ENCODE measurements at regions of chr13 and their contacts with region 1.

Region 1: DNA sequence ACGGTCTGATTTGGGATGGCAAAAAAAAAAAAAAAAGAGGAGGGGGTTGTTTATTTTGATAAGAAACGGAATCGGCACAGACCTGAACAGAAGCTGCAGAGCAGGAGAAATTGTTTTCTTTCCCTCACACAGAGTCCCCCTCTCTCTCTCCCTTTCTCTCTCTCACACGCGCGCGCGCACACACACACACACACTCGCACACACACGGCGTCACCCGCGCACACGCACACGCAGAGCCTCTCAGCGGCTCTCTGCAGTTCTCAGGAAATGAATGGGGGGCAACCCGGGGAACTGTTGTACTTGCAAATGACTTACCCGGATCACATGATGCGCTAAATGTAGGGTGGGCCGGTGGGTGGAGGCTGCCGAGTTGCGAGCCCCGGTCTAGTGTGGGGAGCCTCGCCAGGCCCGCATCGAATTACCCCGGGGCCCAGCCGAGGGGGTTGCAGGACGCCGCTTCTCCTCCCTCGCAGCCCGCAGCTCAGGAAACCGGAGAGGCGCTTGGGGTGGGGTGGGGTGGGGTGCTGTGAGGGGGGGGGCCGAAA is 475 bp downstream of the KLF12 start:
- DNase-seq: peak; percentile 76
- H3K4me3 Mint-ChIP-seq: peak overlapping the region; percentile 95
- H3K27ac Mint-ChIP-seq: peak overlapping the region; percentile 99
- H3K4me1 Mint-ChIP-seq: peaks cover 49% of the 10 kb centered on the region
- H3K27me3 Mint-ChIP-seq: peaks cover 3% of the 10 kb centered on the region

Region 2: GRCh38 chr13:72781451-72782439 is 1352.0 kb before region 1 on chr13 and contains the starts of genes DIS3 and PIBF1:
- intact Hi-C with region 1: loop called (anchors 1 kb)
- DNase-seq: peak; percentile 97
- H3K4me3 Mint-ChIP-seq: peak within 1 kb of the TSS; percentile 100
- H3K27ac Mint-ChIP-seq: peak within 1 kb of the TSS; percentile 100
- H3K4me1 Mint-ChIP-seq: peaks cover 65% of the 10 kb centered on the region
- H3K27me3 Mint-ChIP-seq: no peaks in the 10 kb centered on the region
- total RNA-seq, gene DIS3: 49.9 and 55.4 TPM in 2 replicates
- total RNA-seq, gene PIBF1: 20.9 and 21.2 TPM in 2 replicates

Region 3: DNA sequence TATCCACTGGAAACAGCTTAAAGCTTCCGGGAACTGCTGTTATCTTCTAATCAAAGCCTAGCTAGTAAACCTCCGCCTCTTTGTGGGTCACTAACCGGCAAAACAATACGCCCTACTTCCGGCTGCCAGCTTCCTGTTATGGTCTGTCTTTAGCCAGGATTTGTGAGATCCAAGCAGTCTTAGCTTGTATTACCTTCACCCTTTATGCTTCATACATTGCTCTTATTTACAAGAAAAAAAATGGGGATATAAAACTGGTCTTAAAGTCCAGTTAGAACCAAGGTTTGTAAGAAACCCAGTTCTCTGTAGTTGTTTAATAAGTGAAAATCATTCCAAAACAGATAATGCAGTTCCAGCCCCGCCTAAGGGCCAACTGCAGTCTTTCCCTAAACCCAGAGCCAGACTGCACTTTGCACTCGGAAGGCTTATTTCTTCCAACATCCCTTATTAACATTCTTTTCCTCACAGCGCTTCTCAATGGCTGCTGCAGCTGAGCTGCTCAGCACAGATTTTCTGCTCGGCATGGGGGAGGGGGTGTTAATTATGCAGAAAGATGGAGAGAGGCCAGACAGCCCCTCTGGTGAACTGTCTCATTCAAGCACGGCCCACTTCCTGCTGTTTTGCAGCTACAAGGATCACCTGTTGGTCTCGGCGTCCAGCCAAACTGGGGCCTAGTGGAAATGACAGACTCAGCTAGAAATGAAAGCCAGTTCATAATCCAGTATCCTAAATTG is 367.9 kb before region 1 on chr13:
- intact Hi-C with region 1: loop called (anchors 2 kb)
- DNase-seq: peak; percentile 43
- H3K4me3 Mint-ChIP-seq: peak overlapping the region; percentile 69
- H3K27ac Mint-ChIP-seq: peak overlapping the region; percentile 83
- H3K4me1 Mint-ChIP-seq: peaks cover 46% of the 10 kb centered on the region
- H3K27me3 Mint-ChIP-seq: no peaks in the 10 kb centered on the region

Region 4: DNA sequence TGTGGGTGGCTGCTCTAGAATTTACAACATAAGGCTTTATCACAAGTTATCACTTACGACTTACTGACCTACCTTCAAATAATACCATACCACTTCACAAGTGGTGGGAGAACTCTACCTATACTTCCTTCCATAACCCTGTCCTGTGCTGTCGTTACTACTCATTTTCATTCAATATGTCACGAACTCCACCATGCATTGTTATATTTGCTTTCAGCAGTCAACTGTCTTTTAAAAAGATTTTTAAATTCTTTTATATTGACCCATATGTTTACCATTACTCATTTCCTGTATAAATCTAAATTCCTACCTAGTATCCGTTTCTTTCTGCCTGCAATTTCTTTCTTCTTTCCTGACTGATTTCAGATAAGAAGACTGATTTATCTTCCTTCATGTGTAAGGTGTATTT is 199.5 kb before region 1 on chr13:
- intact Hi-C with region 1: loop called (anchors 1 kb)
- DNase-seq: no peak
- H3K4me3 Mint-ChIP-seq: no peak overlapping the region
- H3K27ac Mint-ChIP-seq: no peak overlapping the region
- H3K4me1 Mint-ChIP-seq: peaks cover 12% of the 10 kb centered on the region
- H3K27me3 Mint-ChIP-seq: no peaks in the 10 kb centered on the region

Region 5: GRCh38 chr13:74062933-74063332 is 70.8 kb before region 1 on chr13:
- intact Hi-C with region 1: loop called (anchors 1 kb)
- DNase-seq: no peak
- H3K4me3 Mint-ChIP-seq: peak overlapping the region; percentile 83
- H3K27ac Mint-ChIP-seq: peak overlapping the region; percentile 92
- H3K4me1 Mint-ChIP-seq: peaks cover 60% of the 10 kb centered on the region
- H3K27me3 Mint-ChIP-seq: no peaks in the 10 kb centered on the region

Region 6: DNA sequence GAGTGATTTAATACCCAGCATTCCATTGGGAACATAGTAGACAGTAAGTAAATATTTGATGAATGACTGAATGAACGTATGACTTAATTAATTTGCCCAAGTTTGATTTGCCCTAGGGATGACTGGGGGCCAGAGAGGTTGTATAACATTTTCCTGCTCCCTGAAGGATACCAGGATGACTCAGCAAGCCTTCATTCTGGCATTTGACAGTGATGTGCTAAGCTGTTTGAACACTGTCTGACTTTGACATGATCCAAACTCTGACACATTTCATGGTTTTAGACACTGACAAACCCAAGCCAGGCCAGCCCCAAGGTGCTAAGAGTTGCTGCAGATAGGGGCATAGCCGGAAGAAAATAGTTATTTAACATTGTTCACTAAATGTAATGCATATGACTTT is 53.8 kb after region 1 on chr13:
- intact Hi-C with region 1: no loop called
- DNase-seq: no peak
- H3K4me3 Mint-ChIP-seq: no peak overlapping the region
- H3K27ac Mint-ChIP-seq: no peak overlapping the region
- H3K4me1 Mint-ChIP-seq: peaks cover 10% of the 10 kb centered on the region
- H3K27me3 Mint-ChIP-seq: no peaks in the 10 kb centered on the region

Region 7: GRCh38 chr13:74287724-74288169 is 154.0 kb after region 1 on chr13:
- intact Hi-C with region 1: loop called (anchors 1 kb)
- DNase-seq: peak; percentile 60
- H3K4me3 Mint-ChIP-seq: peak overlapping the region; percentile 52
- H3K27ac Mint-ChIP-seq: peak overlapping the region; percentile 79
- H3K4me1 Mint-ChIP-seq: peaks cover 39% of the 10 kb centered on the region
- H3K27me3 Mint-ChIP-seq: no peaks in the 10 kb centered on the region

Region 8: GRCh38 chr13:75482070-75482819 is 1348.5 kb after region 1 on chr13 and contains the start of gene TBC1D4:
- intact Hi-C with region 1: loop called (anchors 5 kb)
- DNase-seq: peak; percentile 40
- H3K4me3 Mint-ChIP-seq: peak within 1 kb of the TSS; percentile 99
- H3K27ac Mint-ChIP-seq: peak within 1 kb of the TSS; percentile 89
- H3K4me1 Mint-ChIP-seq: peaks cover 45% of the 10 kb centered on the region
- H3K27me3 Mint-ChIP-seq: peaks cover 49% of the 10 kb centered on the region
- total RNA-seq, gene TBC1D4: 66.6 and 73.5 TPM in 2 replicates